ENCODE measurements at regions of chr22 and their contacts with region 1.

Region 1: DNA sequence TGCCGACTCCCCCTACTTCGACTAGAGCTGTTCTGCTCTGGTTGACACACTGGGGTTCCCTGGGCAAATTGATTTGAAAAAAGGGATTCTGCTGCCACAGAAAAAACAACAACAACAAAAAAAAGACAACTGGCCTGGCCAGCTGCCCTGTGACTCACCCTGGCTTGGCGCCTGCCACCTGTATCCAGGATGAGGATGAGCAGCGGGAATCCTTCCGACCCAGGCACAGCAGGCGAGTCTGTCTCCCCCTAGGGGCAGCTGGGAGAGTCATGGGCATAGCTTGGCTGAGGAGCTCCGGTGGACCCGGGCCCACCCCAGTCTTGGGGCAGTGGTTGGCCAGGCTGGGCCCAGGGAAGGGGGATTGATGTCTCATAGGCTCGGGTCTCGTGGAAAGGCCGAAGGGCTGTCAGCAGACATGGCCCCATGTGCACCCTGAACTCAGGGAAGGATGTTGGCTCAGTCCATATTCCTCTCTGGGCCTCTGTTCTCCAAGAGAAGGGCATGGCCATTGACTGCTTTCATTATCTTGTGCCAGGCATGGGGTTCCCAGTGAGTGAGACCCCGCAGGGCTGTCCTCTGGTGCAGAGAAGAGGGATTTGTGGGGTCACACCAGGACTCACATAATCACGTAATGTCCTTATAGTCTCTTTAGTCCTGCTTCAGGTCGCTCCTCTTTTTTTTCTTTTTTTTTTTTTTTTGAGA is 10.4 kb upstream of the SUN2 start:
- DNase-seq: peak; percentile 30
- H3K4me3 ChIP-seq: no peak overlapping the region
- H3K27ac ChIP-seq: no peak overlapping the region
- H3K4me1 ChIP-seq: no peaks in the 10 kb centered on the region
- H3K27me3 ChIP-seq: no peaks in the 10 kb centered on the region
- CTCF ChIP-seq: peak; percentile 84 to 90
- POLR2A ChIP-seq: no peak

Region 2: DNA sequence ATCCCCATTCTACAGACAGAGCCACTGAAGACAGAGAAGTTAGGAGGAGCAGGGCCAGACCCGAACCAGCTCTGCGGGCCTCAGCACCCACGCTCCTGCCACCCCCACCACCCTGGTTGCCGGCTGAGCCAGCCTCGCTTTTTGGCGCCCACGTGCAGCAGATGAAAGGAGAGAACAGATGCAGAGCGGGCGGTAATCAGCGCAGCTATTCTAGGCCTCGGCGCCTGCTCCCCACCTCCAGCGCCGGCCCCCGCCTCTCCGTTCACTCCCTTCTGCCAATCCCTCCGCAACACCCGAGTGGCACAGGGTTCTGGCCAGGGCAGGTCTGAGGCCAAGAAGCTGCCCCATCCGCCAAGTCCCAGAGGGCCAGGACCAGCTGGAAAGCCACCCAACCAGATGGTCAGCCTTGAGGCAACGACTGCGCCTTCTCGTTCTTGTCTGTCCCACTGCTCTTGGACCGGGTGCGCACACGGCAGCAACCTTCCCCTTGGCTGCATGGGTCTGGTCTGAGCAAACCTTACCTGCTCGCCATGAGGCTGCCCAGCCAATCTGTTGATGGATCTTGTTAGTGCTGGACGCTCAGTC is 11.0 kb after region 1 on chr22:
- CTCF ChIA-PET with region 1: interaction called, 82 read pairs
- POLR2A ChIA-PET with region 1: no interaction called
- dilution Hi-C with region 1: no loop called
- intact Hi-C with region 1: no loop called
- DNase-seq: no peak
- H3K4me3 ChIP-seq: no peak overlapping the region
- H3K27ac ChIP-seq: no peak overlapping the region
- H3K4me1 ChIP-seq: no peaks in the 10 kb centered on the region
- H3K27me3 ChIP-seq: no peaks in the 10 kb centered on the region
- CTCF ChIP-seq: no peak
- POLR2A ChIP-seq: no peak

Region 3: GRCh38 chr22:38802671-38803121 is 36.5 kb after region 1 on chr22:
- CTCF ChIA-PET with region 1: interaction called, 16 read pairs
- POLR2A ChIA-PET with region 1: no interaction called
- dilution Hi-C with region 1: no loop called
- intact Hi-C with region 1: no loop called
- DNase-seq: no peak
- H3K4me3 ChIP-seq: no peak overlapping the region
- H3K27ac ChIP-seq: no peak overlapping the region
- H3K4me1 ChIP-seq: no peaks in the 10 kb centered on the region
- H3K27me3 ChIP-seq: peaks cover 10 to 21% of the 10 kb centered on the region in 2 experiments
- CTCF ChIP-seq: no peak
- POLR2A ChIP-seq: no peak

Region 4: DNA sequence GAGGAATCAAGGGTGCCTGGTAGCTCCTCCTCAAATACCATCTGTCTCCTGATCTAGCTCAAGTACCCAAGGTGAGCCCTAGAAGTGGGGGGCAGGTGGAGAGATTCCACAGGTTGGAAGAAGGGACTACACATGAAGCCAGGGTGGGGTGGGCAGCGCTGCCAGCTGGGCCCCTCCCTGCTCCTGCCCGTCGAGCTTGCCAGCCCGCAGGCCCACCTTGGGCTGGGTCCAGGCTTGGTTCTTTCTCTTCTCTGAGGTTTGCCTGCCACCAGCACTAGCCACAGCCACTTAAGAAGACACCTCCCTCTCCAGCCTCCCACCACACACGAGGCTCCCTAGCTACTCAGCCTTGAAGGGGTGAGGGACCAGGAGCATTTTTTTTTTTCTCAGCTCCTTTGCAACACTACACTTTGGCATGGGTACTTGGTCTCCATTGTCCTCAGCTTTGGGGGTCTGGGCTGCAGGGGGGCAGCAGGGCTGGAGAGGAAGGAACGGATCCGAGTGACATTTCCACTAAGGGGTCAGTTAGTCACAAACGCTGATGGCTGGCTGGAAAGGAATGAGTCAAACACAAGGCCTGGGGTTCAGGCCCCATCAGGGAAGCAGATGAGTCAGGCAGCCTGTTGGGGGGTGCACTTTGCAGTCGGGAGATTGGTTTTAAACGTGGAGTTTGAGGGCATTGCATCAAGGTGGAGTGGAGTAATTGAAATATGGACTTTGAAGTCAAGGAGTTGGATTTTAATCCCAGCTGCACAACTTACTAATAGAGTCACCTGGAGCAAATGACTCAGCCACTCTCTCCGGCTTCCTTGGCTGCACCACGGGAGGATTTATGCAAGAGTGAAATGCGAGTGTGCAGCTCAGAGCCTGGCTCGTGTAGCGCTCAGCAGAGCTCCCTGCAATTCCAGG is 85.0 kb after region 1 on chr22:
- CTCF ChIA-PET with region 1: interaction called, 198 read pairs
- POLR2A ChIA-PET with region 1: no interaction called
- dilution Hi-C with region 1: no loop called
- intact Hi-C with region 1: no loop called
- DNase-seq: no peak
- H3K4me3 ChIP-seq: no peak overlapping the region
- H3K27ac ChIP-seq: no peak overlapping the region
- H3K4me1 ChIP-seq: no peaks in the 10 kb centered on the region
- H3K27me3 ChIP-seq: peaks cover 5 to 6% of the 10 kb centered on the region in 2 experiments
- CTCF ChIP-seq: no peak
- POLR2A ChIP-seq: no peak

Region 5: GRCh38 chr22:38927033-38927781 is 161.0 kb after region 1 on chr22:
- CTCF ChIA-PET with region 1: interaction called, 19 read pairs
- POLR2A ChIA-PET with region 1: no interaction called
- dilution Hi-C with region 1: no loop called
- intact Hi-C with region 1: no loop called
- DNase-seq: peak; percentile 63
- H3K4me3 ChIP-seq: no peak overlapping the region
- H3K27ac ChIP-seq: no peak overlapping the region
- H3K4me1 ChIP-seq: peaks cover 18% of the 10 kb centered on the region
- H3K27me3 ChIP-seq: peaks cover 0 to 2% of the 10 kb centered on the region in 2 experiments
- CTCF ChIP-seq: peak; percentile 64 to 90
- POLR2A ChIP-seq: no peak

Region 6: GRCh38 chr22:39117585-39118191 is 351.5 kb after region 1 on chr22:
- CTCF ChIA-PET with region 1: interaction called, 87 read pairs
- POLR2A ChIA-PET with region 1: no interaction called
- dilution Hi-C with region 1: no loop called
- intact Hi-C with region 1: loop called (anchors 2 kb)
- DNase-seq: peak; percentile 57
- H3K4me3 ChIP-seq: no peak overlapping the region
- H3K27ac ChIP-seq: no peak overlapping the region
- H3K4me1 ChIP-seq: no peaks in the 10 kb centered on the region
- H3K27me3 ChIP-seq: peaks cover 18 to 29% of the 10 kb centered on the region in 2 experiments
- CTCF ChIP-seq: peak; percentile 36 to 51
- POLR2A ChIP-seq: no peak